Psoas muscle (tissue), 8 donors: ENCODE measurements at regions of chr21 and their contacts with region 1.

Region 1: DNA sequence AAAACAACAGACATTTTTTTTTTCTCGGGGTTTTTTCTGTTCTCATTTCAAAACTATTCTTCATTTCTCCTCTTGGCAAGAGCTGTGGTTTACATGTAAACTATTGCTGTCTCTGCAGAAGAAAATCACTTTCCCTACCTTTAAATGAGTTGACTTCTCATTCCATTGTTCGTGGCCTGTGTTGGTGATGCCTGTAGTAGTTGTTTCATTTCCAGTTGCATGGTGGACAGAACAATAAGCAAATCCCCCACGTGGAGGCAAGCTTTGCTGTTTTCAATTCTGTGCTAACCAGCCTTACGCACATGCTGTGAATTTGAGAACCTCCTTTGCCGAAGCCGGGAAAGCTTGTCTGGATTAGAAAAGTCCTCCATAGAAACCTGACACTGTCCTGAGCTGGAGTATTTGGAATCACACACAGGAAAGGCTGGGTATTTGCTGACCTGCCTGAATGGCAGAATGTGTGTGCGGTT is 26.2 kb upstream of the MAP3K7CL start:
- DNase-seq: no peak
- ATAC-seq: peak; percentile 90 to 95 (median 91)
- H3K4me3 ChIP-seq: no peak overlapping the region
- H3K27ac ChIP-seq: peak overlapping the region; percentile 81
- H3K4me1 ChIP-seq: peaks cover 14% of the 10 kb centered on the region
- H3K27me3 ChIP-seq: no peaks in the 10 kb centered on the region
- CTCF ChIP-seq: peak; percentile 46

Region 2: GRCh38 chr21:29130270-29130969 is 26.1 kb after region 1 on chr21 and contains the start of gene MAP3K7CL:
- intact Hi-C with region 1: loop called in 1 of 2 experiments (anchors 1 kb)
- DNase-seq: peak; percentile 79 to 87
- ATAC-seq: peak; percentile 94 to 97 (median 96)
- H3K4me3 ChIP-seq: peak within 1 kb of the TSS; percentile 61
- H3K27ac ChIP-seq: peak within 1 kb of the TSS; percentile 91
- H3K4me1 ChIP-seq: peaks cover 23% of the 10 kb centered on the region
- H3K27me3 ChIP-seq: no peaks in the 10 kb centered on the region
- CTCF ChIP-seq: no peak
- total RNA-seq, gene MAP3K7CL: 15.3 to 107 (median 23.7) TPM

Region 3: DNA sequence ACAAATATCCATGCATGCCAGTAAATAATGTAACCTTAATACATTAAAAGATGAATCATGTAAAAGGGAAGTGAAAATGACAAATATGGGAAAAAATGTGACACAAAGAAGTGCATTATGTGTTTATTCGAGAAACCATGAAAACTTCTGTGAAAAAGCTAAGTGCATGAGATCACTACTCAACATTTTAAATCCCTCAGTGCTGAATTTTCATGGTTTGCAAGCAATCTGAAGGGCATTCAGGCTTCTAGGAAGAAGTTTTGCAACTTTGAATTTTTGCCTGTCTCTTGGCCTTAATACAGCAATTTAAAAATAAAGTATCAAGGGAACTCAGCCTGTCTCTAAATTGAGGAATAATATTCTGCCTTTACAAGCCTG is 104.4 kb after region 1 on chr21:
- intact Hi-C with region 1: no loop called
- DNase-seq: no peak
- ATAC-seq: no peak
- H3K4me3 ChIP-seq: no peak overlapping the region
- H3K27ac ChIP-seq: peak overlapping the region; percentile 53
- H3K4me1 ChIP-seq: peaks cover 3% of the 10 kb centered on the region
- H3K27me3 ChIP-seq: no peaks in the 10 kb centered on the region
- CTCF ChIP-seq: no peak

Region 4: GRCh38 chr21:29306920-29307319 is 202.6 kb after region 1 on chr21:
- intact Hi-C with region 1: loop called in 1 of 2 experiments (anchors 5 kb)
- DNase-seq: no peak
- ATAC-seq: no peak
- H3K4me3 ChIP-seq: no peak overlapping the region
- H3K27ac ChIP-seq: no peak overlapping the region
- H3K4me1 ChIP-seq: peaks cover 85% of the 10 kb centered on the region
- H3K27me3 ChIP-seq: no peaks in the 10 kb centered on the region
- CTCF ChIP-seq: no peak